ENCODE measurements at regions of chr1 and their contacts with region 1.

Region 1: GRCh38 chr1:87513255-87513654 is 184.6 kb downstream of the LMO4 start:
- DNase-seq: no peak
- H3K4me3 ChIP-seq: no peak overlapping the region
- H3K27ac ChIP-seq: no peak overlapping the region
- H3K4me1 ChIP-seq: no peaks in the 10 kb centered on the region
- H3K27me3 ChIP-seq: no peaks in the 10 kb centered on the region
- CTCF ChIP-seq: no peak
- EP300 ChIP-seq: no peak
- POLR2A ChIP-seq: no peak

Region 2: GRCh38 chr1:86537928-86538695 is 975.1 kb before region 1 on chr1:
- in situ Hi-C with region 1: no loop called
- intact Hi-C with region 1: loop called (anchors 5 kb)
- DNase-seq: no peak
- H3K4me3 ChIP-seq: no peak overlapping the region
- H3K27ac ChIP-seq: peak overlapping the region; percentile 36 to 72 (median 52)
- H3K4me1 ChIP-seq: peaks cover 0 to 24% (median 13%) of the 10 kb centered on the region in 4 donors
- H3K27me3 ChIP-seq: no peaks in the 10 kb centered on the region
- CTCF ChIP-seq: no peak
- EP300 ChIP-seq: no peak
- POLR2A ChIP-seq: no peak